Activated CD8-positive, alpha-beta T cell treated with anti-CD3 and anti-CD28 coated beads, Interleukin-2, amount 10 ng/mL, durations not matched to agents 7 days and 5 days (primary cell): ENCODE measurements at regions of chr16 and their contacts with region 1.

Region 1: DNA sequence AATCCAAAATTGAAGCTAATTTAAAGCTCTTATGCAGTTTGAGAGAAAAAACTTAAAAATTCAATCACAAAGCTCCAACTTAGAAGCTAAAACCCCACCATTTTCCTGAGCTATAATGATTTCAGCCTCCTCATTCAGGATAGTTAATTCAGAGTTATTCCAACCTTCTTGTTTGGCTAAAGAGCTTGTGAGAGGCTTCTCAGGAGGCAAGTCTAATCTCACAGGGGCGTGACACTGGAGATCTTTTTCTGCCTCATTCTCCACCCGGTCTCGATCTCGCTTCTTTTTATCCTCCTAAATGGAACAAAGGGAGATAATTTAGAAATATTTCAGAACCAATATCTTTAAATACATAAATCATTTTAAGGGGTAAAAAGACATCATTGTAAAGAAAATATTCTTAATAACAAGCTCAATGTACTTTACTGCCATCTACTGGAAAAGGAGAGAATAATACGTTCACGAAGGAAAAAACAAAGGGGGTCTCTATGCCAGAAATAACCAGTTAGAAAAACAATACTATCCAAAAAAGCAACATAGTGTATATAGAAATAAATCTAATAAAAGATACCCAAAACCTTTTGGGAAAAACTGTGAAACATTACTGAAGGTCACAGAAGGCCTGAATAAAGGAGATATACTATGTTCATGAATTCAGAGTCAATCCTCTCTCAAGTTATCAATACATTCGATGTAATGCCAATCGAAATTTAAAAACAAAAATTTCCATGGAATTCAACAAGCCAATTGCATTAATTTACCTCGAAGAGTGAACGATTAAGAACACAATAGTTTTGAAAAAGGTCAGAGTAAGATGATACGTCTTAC is 13.9 kb downstream of the BRD7 start:
- DNase-seq: no peak
- ATAC-seq: no peak
- H3K4me3 Mint-ChIP-seq: no peak overlapping the region
- H3K27ac Mint-ChIP-seq: no peak overlapping the region
- H3K4me1 Mint-ChIP-seq: peaks cover 30% of the 10 kb centered on the region
- H3K27me3 Mint-ChIP-seq: no peaks in the 10 kb centered on the region

Region 2: DNA sequence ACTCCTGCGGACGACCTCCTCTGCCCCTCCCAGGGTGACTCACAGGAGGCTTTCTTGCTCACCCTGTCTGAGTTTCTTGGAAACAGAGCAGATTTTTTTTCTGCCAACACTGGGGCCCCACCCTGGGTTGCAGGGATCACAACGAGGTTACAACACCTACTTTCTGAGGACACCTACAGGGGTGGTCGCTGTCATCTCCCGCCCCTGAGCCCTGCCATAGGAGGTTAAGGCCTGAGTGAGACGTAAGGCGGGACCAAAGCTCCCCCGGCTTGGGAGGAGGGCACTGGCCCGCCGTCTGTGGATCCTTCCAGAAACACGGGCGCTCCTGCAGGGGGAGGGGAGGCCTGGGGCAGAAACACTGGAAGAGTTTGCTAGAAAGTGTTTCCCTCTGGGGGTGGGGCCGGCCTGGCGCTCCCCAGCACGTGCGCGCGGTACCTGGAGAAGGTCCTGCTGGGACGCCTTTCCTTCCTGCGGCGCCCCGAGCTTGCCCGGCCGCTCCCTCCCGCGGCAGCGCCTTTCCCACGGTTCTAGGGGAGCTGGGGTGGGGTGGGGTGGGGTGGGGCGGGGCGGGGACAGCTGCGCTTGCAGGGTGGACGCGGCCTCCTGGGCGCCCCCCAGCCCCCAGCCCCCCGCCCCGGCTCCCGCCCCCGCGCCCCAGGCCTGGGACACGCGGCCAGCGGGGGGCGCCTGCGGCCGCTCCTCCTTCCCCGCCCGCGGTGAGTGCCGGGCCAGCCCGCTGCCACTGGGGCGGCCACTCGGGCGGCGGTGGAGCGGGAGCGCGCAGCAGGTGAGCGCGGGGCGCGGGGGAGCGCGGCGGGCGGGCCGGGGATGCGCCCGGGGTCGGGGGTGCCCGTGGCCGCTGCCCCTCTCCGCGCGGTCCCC is 109.2 kb before region 1 on chr16:
- CTCF ChIA-PET with region 1: interaction called, 14 read pairs
- POLR2A ChIA-PET with region 1: no interaction called
- DNase-seq: peak; percentile 82
- ATAC-seq: peak; percentile 78
- H3K4me3 Mint-ChIP-seq: peak overlapping the region; percentile 80
- H3K27ac Mint-ChIP-seq: peak overlapping the region; percentile 82
- H3K4me1 Mint-ChIP-seq: peaks cover 34% of the 10 kb centered on the region
- H3K27me3 Mint-ChIP-seq: peaks cover 12% of the 10 kb centered on the region

Region 3: DNA sequence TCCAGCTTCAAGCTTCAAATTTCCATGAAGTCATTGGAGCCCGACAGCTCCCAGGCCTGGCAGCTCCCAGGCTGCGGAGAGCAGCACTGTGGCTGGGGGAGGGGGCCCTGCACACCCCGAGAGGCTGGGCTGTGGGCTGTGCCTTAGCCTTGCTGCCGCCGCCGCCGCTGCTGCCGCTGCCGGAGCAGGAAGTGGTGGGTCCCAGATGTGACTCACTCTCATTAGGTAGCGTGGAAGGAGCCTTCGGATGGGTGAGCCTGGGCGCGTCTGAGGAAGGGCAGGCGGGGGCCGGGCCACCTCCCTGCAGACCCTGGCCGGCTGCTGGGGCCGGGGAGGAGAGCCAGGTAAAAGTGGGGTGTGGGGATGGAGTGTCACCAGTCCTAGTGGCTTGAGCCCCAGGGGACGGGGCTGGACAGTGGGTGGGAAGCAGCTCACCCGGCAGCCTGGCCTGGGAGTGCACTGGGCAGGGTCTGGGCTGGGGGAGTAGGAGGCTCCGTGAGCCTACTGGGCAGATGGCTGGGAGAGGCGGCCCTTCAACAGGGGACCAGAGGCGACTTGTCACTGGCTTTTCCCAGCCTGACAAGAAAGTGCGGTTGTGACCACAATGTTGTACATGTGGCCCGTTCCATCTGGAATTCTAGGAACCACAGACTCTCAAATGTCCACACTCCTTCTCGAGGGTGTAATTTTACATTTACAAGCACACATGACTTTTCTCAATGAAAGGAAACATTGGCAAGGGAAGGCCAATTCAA is 88.3 kb before region 1 on chr16 and contains the start of gene ADCY7:
- CTCF ChIA-PET with region 1: interaction called, 11 read pairs
- POLR2A ChIA-PET with region 1: no interaction called
- DNase-seq: peak; percentile 90
- ATAC-seq: peak; percentile 91
- H3K4me3 Mint-ChIP-seq: peak within 1 kb of the TSS; percentile 98
- H3K27ac Mint-ChIP-seq: peak within 1 kb of the TSS; percentile 98
- H3K4me1 Mint-ChIP-seq: peaks cover 83% of the 10 kb centered on the region
- H3K27me3 Mint-ChIP-seq: no peaks in the 10 kb centered on the region
- total RNA-seq, gene ADCY7: 214 to 225 TPM

Region 4: DNA sequence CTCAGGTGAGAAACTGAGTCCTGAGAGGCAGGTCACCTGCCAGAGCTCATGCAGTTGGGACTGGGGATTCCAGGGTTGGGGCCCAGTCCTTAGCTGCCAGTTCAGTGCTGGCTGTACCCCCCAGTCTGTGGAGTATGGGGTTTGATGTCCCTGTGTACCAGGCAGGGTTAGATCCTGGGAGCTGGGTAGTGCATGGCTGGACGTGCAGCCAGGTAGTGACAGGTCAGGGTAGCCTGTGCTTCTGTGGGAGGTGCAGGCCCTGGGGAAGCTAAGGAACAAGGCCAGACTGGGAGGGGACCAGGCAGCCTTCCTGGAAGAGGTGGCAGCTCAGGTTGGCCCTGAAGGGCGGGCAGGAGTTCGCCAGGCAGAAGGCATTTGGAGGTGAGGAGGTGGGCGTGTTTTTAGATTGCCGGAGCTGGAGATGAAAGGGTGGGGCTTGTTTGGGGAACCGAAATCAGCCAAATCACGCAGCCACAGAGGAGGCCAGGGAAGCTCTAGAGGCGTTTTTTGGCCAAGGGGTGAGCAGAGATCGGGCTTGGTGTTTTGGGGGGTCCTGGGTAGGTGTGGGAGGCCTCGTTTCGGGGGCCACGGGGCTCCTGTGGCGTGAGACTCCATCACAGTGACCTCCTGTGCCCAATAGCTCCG is 81.0 kb before region 1 on chr16:
- CTCF ChIA-PET with region 1: interaction called, 14 read pairs
- POLR2A ChIA-PET with region 1: interaction called, 3 read pairs
- DNase-seq: peak; percentile 68
- ATAC-seq: peak; percentile 46
- H3K4me3 Mint-ChIP-seq: peak overlapping the region; percentile 79
- H3K27ac Mint-ChIP-seq: peak overlapping the region; percentile 98
- H3K4me1 Mint-ChIP-seq: peaks cover 98% of the 10 kb centered on the region
- H3K27me3 Mint-ChIP-seq: no peaks in the 10 kb centered on the region

Region 5: DNA sequence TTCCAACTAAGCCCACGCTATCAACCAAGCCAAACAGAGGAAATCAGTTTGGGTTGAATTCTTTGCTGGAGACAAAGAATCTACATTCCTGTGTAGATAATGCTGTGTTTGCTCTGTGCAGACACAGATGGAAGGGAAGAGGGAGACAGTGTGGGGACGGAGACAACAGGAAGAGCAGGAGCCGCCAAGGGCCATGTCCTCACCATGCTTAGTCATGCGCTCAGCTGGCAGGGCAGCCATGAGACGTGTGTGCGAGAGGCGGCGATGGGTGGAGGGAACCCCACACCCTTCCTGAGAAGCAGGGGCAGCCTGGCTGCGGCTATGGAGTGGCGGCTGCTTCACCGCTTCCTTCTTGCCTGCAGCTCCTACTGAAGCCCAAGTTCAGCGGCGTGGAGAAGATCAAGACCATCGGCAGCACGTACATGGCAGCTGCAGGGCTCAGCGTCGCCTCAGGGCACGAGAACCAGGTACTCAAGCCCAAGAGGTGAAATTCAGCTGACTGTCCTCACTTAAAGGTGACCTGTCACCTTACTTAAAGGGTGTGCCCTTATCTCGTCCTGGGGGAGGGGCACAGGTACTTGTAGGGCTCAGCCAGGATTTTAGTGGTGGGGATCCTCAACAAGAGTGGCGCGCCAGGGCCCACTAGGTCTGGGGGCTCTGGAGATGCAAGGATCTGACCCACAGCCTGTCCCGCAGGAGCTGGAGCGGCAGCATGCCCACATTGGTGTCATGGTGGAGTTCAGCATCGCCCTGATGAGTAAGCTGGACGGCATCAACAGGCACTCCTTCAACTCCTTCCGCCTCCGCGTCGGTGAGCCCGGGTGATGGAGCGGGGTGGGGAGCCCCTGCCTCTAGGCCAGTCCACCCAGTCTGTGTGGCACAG is 41.0 kb before region 1 on chr16:
- CTCF ChIA-PET with region 1: interaction called, 12 read pairs
- POLR2A ChIA-PET with region 1: interaction called, 3 read pairs
- DNase-seq: peak; percentile 75
- ATAC-seq: peak; percentile 78
- H3K4me3 Mint-ChIP-seq: peak overlapping the region; percentile 37
- H3K27ac Mint-ChIP-seq: peak overlapping the region; percentile 83
- H3K4me1 Mint-ChIP-seq: peaks cover 49% of the 10 kb centered on the region
- H3K27me3 Mint-ChIP-seq: no peaks in the 10 kb centered on the region

Region 6: DNA sequence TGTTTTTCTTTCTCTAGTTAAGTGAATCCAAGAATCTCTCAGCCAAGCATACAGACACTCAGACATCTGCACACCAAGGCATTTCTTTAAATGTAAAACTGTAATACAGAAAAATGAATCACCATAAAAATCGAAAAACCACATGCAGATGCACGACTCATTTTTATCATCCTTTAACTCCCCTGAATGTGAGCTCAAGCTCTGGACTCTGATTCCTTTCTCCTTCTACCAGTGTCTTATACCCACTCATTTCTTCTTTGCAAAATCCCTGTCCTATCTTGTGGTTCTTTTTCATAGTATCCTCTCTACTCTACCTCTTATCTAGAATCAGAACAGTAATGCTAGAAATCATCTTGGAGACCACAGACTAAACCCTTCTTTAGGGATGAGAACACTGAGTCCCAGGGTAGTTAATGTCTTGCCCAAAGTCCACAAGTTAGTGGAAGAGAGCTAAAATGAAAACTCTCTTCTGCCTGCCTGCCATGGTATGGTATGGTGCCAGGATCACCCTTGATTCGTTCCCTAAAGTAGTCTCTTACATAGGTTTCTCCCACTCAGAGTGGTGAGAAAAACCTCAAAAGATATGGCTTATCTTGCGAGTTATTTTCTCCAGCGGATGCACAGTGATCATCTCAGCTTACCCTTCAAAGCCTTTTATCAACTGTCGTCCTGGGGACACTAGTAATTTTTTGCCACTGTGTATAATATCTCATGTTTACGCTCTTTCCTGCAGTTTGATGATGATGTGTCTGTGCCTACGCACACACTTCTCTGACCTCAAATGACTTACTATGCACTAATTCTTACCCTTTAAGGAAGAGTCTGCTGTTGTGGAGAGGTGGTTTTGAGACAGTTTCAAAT is 16.2 kb before region 1 on chr16:
- CTCF ChIA-PET with region 1: interaction called, 439 read pairs
- POLR2A ChIA-PET with region 1: interaction called, 6 read pairs
- DNase-seq: no peak
- ATAC-seq: peak; percentile 59
- H3K4me3 Mint-ChIP-seq: peak overlapping the region; percentile 59
- H3K27ac Mint-ChIP-seq: peak overlapping the region; percentile 88
- H3K4me1 Mint-ChIP-seq: peaks cover 44% of the 10 kb centered on the region
- H3K27me3 Mint-ChIP-seq: no peaks in the 10 kb centered on the region

Region 7: DNA sequence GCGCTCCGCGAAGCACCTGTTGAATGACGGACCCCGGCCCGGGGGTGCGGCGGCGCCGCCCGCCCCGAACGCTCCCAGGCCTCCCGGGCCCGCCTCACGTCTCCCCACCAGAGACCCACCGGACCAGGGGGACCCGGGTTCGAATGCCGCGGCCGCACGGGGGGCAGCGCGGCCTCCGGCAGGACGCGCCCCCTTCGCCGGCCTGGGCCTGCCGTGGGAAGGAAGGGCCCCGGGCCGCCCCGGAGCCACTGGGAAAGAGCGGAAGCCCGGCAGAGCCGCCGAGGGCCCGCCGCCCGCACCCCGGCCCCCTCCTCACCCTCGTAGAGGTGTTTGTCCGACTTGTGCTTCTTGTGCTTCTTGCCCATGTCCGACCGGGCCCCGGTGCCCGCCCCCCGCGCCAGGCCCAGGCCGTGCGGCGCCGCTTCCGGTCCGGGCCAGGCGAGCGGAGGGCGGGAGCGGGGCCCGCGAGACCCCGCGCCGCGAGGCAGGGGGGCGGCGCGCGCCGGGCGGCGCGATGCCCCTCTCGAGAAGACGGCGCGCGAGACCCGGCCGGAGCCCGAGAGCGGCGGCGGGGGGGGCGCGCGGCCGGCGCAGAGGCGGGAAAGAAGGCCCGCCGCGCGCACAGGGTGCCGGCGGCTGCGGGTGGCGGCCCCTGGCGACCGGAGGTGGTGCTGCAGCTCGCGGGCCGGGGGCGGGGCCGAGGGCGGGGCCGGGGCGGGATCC is 13.7 kb after region 1 on chr16 and contains the start of gene BRD7:
- CTCF ChIA-PET with region 1: interaction called, 32 read pairs
- POLR2A ChIA-PET with region 1: interaction called, 3 read pairs
- DNase-seq: peak; percentile 69
- ATAC-seq: peak; percentile 84
- H3K4me3 Mint-ChIP-seq: peak within 1 kb of the TSS; percentile 82
- H3K27ac Mint-ChIP-seq: peak within 1 kb of the TSS; percentile 93
- H3K4me1 Mint-ChIP-seq: peaks cover 41% of the 10 kb centered on the region
- H3K27me3 Mint-ChIP-seq: peaks cover 2% of the 10 kb centered on the region
- total RNA-seq, gene BRD7: 88.9 to 90.4 TPM